ENCODE measurements at regions of chr7 and their contacts with region 1.

Region 1: GRCh38 chr7:120792091-120792860 is 65.7 kb downstream of the TSPAN12 start:
- DNase-seq: peak; percentile 28
- H3K4me3 Mint-ChIP-seq: no peak overlapping the region
- H3K27ac Mint-ChIP-seq: no peak overlapping the region
- H3K4me1 Mint-ChIP-seq: no peaks in the 10 kb centered on the region
- H3K27me3 Mint-ChIP-seq: peaks cover 5% of the 10 kb centered on the region

Region 2: DNA sequence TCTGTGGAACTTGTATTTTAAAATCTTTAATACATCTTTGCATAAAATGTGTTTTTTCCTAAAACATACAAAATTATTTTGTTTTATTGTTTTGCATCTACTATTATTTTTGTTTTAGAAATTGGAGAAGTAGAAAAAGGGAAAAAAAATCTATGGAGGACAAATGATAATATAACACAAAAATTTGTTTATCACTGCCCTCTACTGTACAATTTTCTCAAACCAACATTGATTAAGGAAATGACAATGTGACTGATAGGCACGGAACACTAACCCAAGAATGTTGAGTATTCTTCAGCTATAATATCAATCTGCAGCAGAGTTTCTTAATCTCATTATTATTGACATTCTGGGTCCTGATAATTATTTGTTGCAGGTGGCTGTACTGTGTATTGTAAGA is 148.8 kb after region 1 on chr7:
- intact Hi-C with region 1: loop called (anchors 1 kb)
- DNase-seq: no peak
- H3K4me3 Mint-ChIP-seq: no peak overlapping the region
- H3K27ac Mint-ChIP-seq: no peak overlapping the region
- H3K4me1 Mint-ChIP-seq: no peaks in the 10 kb centered on the region
- H3K27me3 Mint-ChIP-seq: peaks cover 15% of the 10 kb centered on the region

Region 3: DNA sequence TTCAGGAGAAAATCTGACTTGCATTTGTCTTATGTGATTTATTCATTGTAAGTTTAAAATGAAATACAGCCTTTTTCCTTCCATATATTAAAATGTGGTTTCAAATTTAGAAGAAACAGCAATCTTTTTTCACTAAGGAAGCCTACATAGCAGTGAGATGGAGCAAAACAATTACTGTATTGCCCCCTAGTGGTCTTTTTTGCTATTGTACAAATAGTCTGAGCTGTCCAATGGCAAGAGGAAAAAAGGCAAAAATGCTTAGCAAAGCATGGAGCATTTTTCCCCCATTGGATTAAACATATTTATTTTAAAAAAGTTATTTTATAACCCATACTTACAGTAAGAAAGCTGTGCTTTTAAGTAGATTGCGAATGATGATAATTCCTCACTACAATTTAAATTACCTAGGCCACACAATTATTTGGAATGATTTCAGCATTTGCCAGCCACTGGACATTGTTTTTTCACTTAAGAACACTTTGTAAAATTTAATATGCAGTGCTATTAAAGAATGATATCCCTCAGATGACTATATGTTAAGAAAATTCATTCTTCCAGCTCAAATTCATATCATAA is 315.7 kb after region 1 on chr7:
- intact Hi-C with region 1: loop called (anchors 1 kb)
- DNase-seq: no peak
- H3K4me3 Mint-ChIP-seq: no peak overlapping the region
- H3K27ac Mint-ChIP-seq: no peak overlapping the region
- H3K4me1 Mint-ChIP-seq: no peaks in the 10 kb centered on the region
- H3K27me3 Mint-ChIP-seq: peaks cover 10% of the 10 kb centered on the region

Measured in activated T-helper 1 cell treated with anti-CD3 and anti-CD28 coated beads, Interleukin-12 subunit alpha, Interleukin-12 subunit beta, Interleukin-2, Interleukin-4 antibody, amounts not matched to agents 30 ng/mL and 10 ng/mL and 1 ng/mL, durations not matched to agents 14 hours and 24 hours and 36 hours (primary cell).